Cardiac septum (tissue), 1 donor: ENCODE measurements at regions of chr6 and their contacts with region 1.

Region 1: DNA sequence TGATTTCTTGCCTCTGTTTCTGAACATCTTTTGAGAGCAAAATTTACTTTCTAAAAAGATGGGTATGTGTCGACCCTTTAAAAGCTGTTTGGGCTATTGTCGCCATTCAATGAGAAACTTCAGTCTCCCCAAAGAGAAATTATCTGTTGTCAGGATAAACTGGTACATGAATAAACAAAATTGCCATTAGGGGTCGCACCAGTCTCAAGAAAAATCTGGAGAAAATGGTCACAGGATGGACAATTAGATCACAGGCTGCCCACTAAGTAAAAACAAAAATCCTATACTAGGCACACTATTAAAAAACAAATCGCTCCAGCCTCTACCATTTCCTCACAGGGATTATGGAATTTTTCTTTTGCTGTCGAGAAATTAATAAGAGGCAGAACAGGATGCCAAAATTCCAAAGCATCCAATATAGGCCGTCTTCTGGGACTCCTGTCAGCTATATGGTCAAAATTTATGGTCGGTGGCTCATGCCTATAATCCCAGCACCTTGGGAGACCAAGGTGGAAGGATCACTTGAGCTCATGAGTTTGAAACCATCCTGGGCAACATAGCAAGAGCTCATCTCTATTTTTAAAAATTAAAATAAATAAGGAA is 5.5 kb upstream of the HLA-E start:
- DNase-seq: no peak

Region 2: DNA sequence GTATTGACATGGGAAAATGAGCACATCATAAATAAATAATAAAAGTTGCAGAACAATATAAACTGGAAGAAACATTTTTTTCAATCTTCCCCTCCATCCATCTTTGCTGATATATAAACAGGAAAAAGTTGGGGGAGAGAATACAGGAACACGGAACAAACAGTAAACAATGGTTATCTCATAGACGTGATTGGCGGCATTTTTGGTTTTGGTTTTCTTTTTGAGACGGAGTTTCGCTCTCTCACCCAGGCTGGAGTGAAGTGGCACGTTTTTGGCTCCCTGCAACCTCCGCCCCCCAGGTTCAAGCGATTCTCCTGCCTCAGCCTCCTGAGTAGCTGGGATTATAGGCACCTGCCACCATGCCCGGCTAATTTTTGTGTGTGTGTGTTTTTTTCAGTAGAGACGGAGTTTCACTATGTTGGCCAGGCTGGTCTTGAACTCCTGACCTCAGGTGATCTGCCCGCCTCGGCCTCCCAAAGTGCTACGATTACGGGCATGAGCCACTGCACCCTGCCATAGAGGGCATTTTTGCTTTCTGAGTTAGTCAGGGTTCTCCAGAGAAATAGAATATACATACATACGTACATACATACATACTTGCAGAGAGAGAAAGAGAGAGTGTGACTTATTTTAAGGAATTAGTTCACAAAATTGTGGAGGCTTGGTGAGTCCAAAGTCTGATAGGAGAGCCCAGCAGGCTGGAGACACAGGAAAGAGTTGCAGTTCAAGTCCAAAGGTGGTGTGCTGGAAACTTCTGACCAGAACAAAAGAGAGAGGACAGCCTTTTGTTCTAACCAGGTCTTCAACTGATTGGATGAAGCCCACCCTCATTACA is 49.9 kb after region 1 on chr6:
- intact Hi-C with region 1: loop called (anchors 2 kb)
- DNase-seq: no peak

Region 3: GRCh38 chr6:30600451-30600961 is 116.7 kb after region 1 on chr6:
- intact Hi-C with region 1: loop called (anchors 5 kb)
- DNase-seq: no peak

Region 4: GRCh38 chr6:30857549-30857948 is 373.8 kb after region 1 on chr6:
- intact Hi-C with region 1: no loop called
- DNase-seq: no peak